Activated naive CD4-positive, alpha-beta T cell treated with anti-CD3 and anti-CD28 coated beads, Interleukin-2, amount 10 ng/mL, durations not matched to agents 7 days and 5 days (primary cell): ENCODE measurements at regions of chr6 and their contacts with region 1.

Region 1: GRCh38 chr6:43667245-43668150 is 20.1 kb downstream of the MRPS18A start:
- DNase-seq: peak; percentile 88
- H3K4me3 Mint-ChIP-seq: peak overlapping the region; percentile 41
- H3K27ac Mint-ChIP-seq: peak overlapping the region; percentile 71
- H3K4me1 Mint-ChIP-seq: peaks cover 46% of the 10 kb centered on the region
- H3K27me3 Mint-ChIP-seq: peaks cover 16% of the 10 kb centered on the region

Region 2: DNA sequence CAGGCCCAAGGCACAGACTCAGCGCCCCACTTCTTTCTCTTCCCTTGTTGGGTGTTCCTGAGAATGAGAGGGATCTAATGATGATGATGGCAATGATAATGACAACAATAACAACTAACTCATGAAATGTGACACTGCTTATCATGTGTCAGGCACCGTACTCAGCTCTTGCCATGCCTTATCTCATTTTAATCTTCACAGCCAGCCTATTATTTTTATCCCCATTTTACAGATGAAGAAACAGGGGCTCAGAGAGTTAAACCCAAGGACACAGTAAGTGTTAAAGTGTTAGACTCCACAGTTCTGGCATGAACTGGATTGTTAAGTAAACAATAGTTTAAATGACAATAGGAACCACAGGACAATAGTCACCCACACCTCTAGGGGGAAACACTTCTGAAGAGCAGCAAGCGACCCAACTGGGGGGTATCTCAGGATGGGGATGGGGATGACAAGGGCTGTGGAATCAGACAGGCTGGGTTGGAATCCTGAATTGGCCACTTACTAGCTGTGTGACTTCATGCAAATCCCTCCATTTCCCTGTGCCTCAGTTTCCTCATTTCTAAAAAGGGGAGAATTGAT is 10.2 kb before region 1 on chr6:
- CTCF ChIA-PET with region 1: interaction called, 27 read pairs
- DNase-seq: no peak
- H3K4me3 Mint-ChIP-seq: no peak overlapping the region
- H3K27ac Mint-ChIP-seq: no peak overlapping the region
- H3K4me1 Mint-ChIP-seq: peaks cover 15% of the 10 kb centered on the region
- H3K27me3 Mint-ChIP-seq: peaks cover 11% of the 10 kb centered on the region

Region 3: DNA sequence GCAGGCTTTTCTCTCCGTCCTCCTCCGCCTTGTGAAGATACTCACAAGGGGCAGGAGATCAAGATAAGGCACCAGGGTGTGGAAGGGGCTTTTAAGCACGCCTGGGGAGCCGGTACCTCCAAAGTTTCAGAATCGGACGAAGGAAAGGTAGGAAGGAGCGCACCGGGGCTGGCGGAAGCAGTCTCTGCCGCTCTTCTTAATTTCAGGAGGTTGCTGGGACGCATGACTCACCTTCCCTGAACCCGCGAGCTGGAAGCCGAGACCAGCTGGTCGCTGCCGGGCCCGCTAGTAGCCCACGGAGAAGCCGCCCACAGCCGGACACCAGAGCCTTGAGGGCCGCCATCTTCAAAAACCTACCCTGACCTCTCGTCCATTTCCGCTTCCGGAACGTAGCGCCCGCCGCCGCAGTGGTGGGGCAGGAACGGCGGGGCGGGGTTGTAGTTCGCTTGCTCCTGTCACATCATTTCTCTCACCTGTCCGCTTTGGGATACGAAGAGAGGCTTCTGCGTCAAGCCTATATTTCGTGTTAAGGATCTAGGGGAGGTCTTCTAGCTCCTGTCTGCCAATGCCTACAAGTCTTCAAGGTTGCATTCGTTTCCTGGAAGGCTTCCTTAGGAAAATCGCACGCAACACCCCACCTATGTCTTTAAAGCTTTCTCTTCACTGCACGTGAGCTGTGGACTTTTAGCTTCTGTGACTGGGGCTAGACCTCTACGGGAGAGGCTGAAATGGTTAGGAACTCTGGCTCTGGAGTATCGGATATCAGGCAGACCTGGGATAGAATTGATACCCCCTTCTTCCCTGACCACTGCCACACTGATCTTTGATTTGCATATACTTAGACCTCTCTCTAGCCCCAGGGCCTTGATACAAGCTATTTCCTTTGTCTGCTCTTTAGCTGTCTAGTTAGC is 20.2 kb after region 1 on chr6 and contains the start of gene MRPS18A:
- CTCF ChIA-PET with region 1: interaction called, 12 read pairs
- DNase-seq: peak; percentile 89
- H3K4me3 Mint-ChIP-seq: peak within 1 kb of the TSS; percentile 95
- H3K27ac Mint-ChIP-seq: peak within 1 kb of the TSS; percentile 75
- H3K4me1 Mint-ChIP-seq: peaks cover 46% of the 10 kb centered on the region
- H3K27me3 Mint-ChIP-seq: peaks cover 10% of the 10 kb centered on the region

Region 4: GRCh38 chr6:43764721-43765120 is 97.2 kb after region 1 on chr6:
- CTCF ChIA-PET with region 1: interaction called, 27 read pairs
- DNase-seq: no peak
- H3K4me3 Mint-ChIP-seq: no peak overlapping the region
- H3K27ac Mint-ChIP-seq: no peak overlapping the region
- H3K4me1 Mint-ChIP-seq: peaks cover 5% of the 10 kb centered on the region
- H3K27me3 Mint-ChIP-seq: peaks cover 71% of the 10 kb centered on the region

Region 5: DNA sequence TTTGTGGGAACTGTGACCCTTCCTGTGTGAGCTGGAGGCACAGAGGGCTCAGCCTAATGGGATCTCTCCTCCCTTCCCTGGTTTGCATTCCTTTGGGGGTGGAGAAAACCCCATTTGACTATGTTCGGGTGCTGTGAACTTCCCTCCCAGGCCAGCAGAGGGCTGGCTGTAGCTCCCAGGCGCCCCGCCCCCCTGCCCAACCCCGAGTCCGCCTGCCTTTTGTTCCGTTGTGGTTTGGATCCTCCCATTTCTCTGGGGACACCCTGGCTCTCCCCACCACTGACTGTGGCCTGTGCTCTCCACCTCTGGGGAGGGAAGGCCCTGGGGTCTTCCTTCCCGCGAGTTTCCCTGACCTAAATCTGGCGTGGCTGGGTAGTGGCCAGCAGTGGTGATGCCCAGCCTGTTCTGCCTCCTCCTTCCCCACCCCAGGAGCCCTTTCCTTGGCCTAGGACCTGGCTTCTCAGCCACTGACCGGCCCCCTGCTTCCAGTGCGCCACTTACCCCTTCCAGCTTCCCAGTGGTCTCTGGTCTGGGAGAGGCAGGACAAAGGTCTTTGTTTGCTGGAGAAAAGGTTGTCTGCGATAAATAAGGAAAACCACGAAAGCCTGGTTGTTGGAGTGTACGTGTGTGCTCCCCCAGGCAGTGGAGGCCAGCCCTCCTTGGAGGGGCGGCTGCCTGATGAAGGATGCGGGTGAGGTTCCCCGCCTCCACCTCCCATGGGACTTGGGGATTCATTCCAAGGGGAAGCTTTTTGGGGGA is 107.5 kb after region 1 on chr6:
- CTCF ChIA-PET with region 1: interaction called, 43 read pairs
- DNase-seq: peak; percentile 79
- H3K4me3 Mint-ChIP-seq: peak overlapping the region; percentile 38
- H3K27ac Mint-ChIP-seq: peak overlapping the region; percentile 74
- H3K4me1 Mint-ChIP-seq: peaks cover 49% of the 10 kb centered on the region
- H3K27me3 Mint-ChIP-seq: peaks cover 7% of the 10 kb centered on the region

Region 6: GRCh38 chr6:43900911-43901732 is 233.6 kb after region 1 on chr6:
- CTCF ChIA-PET with region 1: no interaction called
- DNase-seq: no peak
- H3K4me3 Mint-ChIP-seq: no peak overlapping the region
- H3K27ac Mint-ChIP-seq: no peak overlapping the region
- H3K4me1 Mint-ChIP-seq: no peaks in the 10 kb centered on the region
- H3K27me3 Mint-ChIP-seq: peaks cover 37% of the 10 kb centered on the region

Region 7: GRCh38 chr6:43977404-43978111 is 310.1 kb after region 1 on chr6:
- CTCF ChIA-PET with region 1: no interaction called
- DNase-seq: peak; percentile 16
- H3K4me3 Mint-ChIP-seq: no peak overlapping the region
- H3K27ac Mint-ChIP-seq: no peak overlapping the region
- H3K4me1 Mint-ChIP-seq: no peaks in the 10 kb centered on the region
- H3K27me3 Mint-ChIP-seq: peaks cover 52% of the 10 kb centered on the region